ENCODE measurements at regions of chr2 and their contacts with region 1.

Region 1: GRCh38 chr2:121530212-121530705 is 421 bp upstream of the RNU4ATAC start:
- DNase-seq: peak; percentile 72
- H3K4me3 Mint-ChIP-seq: peak overlapping the region; percentile 96
- H3K27ac Mint-ChIP-seq: peak overlapping the region; percentile 97
- H3K4me1 Mint-ChIP-seq: peaks cover 64% of the 10 kb centered on the region
- H3K27me3 Mint-ChIP-seq: no peaks in the 10 kb centered on the region

Region 2: GRCh38 chr2:119678998-119679710 is 1851.1 kb before region 1 on chr2 and contains the start of gene TMEM177:
- intact Hi-C with region 1: loop called (anchors 10 kb)
- DNase-seq: peak; percentile 90
- H3K4me3 Mint-ChIP-seq: peak within 1 kb of the TSS; percentile 96
- H3K27ac Mint-ChIP-seq: peak within 1 kb of the TSS; percentile 85
- H3K4me1 Mint-ChIP-seq: peaks cover 25% of the 10 kb centered on the region
- H3K27me3 Mint-ChIP-seq: peaks cover 4% of the 10 kb centered on the region
- total RNA-seq, gene TMEM177: 16.6 and 17.4 TPM in 2 replicates

Region 3: GRCh38 chr2:121237980-121238665 is 292.1 kb before region 1 on chr2:
- intact Hi-C with region 1: no loop called
- DNase-seq: no peak
- H3K4me3 Mint-ChIP-seq: no peak overlapping the region
- H3K27ac Mint-ChIP-seq: no peak overlapping the region
- H3K4me1 Mint-ChIP-seq: no peaks in the 10 kb centered on the region
- H3K27me3 Mint-ChIP-seq: no peaks in the 10 kb centered on the region

Region 4: DNA sequence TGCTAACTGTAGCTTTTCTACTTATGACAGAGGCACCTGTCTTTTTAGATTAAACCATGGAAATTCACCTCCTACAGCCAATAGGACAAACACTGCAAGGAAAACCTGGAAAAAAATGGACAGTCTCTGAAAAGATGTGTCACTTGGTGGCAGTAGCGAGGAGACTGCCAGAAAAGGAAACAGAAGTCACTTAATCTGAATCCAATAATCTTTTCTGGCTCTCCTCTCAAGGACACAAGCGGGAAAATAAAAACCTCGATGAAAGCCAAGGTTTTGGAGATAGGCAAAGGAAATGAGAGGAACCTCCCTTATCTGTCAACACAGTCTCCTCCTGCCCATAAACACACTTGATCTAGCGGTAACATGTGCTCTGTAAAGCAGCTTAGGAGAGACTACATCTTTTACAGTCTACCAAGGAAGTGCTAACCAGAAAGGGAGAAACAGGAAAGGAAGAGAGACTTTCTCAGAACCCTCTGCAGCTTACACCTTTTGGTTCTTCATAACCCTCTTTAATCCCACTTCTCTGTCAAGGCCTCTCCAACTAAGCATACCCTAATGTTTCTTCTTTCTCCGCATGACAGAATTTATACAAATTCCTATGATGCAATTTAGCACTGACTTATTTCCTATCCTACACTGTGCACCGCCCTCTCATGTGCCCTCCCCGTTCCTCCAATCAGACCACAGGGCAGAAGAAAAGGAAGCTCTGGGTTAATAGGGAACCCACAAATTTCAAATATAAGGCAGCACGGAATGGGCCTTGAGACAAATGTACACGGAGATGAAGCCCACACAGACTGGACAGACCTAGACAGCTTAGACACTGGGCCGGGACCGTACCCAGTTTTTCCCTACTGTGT is 66.2 kb after region 1 on chr2:
- intact Hi-C with region 1: loop called (anchors 2 kb)
- DNase-seq: no peak
- H3K4me3 Mint-ChIP-seq: peak overlapping the region; percentile 60
- H3K27ac Mint-ChIP-seq: peak overlapping the region; percentile 61
- H3K4me1 Mint-ChIP-seq: peaks cover 58% of the 10 kb centered on the region
- H3K27me3 Mint-ChIP-seq: no peaks in the 10 kb centered on the region

Region 5: GRCh38 chr2:121699421-121700333 is 169.4 kb after region 1 on chr2:
- intact Hi-C with region 1: loop called (anchors 1 kb)
- DNase-seq: peak; percentile 83
- H3K4me3 Mint-ChIP-seq: peak overlapping the region; percentile 85
- H3K27ac Mint-ChIP-seq: peak overlapping the region; percentile 95
- H3K4me1 Mint-ChIP-seq: peaks cover 48% of the 10 kb centered on the region
- H3K27me3 Mint-ChIP-seq: peaks cover 2% of the 10 kb centered on the region

Region 6: DNA sequence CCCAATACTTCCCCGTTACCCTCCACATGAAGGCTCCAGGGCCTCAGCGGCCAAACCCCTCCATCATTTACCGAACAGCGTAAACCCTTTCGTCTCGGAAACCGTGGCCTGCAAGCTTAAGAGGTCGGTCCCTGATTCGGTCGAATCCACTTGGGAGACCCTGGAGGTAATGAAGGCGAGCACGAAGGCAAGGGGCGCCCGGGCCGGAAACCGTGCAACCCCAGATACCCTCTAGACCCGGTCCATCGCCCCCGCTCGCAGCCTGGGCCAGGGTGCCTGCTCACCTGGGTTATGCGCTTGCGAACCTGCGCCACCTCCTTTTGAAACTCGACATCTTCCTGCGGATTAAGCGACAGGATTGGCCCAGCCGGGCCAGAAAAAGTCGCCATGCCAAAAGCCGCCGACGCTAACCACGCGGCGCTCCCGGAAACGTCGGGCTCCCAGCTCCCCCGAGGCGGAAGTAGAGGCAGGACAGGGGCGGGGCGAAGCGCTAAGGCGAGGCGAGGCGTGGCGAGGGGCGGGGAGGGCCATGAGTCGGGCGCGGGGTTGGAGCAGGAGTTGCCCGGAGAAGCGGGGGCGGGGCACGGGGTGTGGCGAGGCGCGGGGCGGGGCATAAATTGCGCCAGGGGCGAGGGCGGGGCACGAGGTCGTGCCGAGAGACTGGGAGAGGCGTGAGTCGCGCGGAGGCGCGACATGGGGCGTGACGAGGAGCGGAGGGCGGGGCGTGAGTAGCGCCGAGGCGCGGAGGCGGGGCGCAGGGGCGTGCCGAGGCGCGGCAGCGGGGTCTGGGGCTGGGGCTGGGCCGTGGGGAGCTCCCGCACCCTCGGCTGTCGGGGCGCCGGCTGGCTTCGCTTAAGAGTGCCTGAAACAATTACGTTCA is 206.4 kb after region 1 on chr2 and contains the start of gene NIFK:
- intact Hi-C with region 1: loop called (anchors 1 kb)
- DNase-seq: peak; percentile 99
- H3K4me3 Mint-ChIP-seq: peak within 1 kb of the TSS; percentile 89
- H3K27ac Mint-ChIP-seq: peak within 1 kb of the TSS; percentile 95
- H3K4me1 Mint-ChIP-seq: peaks cover 22% of the 10 kb centered on the region
- H3K27me3 Mint-ChIP-seq: no peaks in the 10 kb centered on the region
- total RNA-seq, gene NIFK: 150 TPM in 2 replicates